ENCODE measurements at regions of chr5 and their contacts with region 1.

Region 1: DNA sequence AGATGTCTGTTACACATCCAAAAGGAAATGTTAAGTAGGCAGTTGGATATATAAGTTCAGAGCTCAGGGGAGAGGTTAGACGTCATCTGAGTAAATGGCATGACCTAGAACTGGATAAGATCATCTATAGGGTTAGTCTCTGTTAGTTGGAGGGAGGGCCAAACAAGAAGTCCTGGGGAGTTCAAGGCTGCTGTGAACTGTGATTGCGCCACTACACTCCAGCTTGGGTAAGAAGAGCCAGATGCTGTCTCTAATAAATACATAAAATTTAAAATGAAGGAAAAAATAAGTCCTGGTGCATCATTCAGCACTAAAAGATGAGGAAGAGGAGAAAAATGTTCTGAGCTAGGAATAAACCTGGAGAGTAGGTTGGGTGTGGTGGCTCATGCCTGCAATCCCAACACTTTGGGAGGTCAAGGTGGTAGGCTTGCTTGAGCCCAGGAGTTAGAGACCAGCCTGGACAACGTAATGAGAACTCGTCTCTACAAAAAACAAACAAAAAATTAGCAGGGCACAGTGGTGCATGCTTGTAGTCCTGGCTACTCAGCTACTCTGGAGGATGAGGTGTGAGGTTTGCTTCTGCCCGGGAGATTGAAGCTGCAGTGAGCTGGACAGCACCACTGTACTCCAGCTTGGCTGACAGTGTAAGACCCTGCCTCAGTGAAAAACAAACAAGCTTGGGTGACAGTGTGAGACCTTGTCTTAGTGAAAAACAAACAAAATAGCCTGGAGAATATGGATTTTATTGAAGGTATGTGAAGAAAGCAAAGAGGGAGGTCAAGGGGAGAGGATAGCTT is 123.6 kb downstream of the ACTBL2 start:
- H3K4me3 ChIP-seq: no peak overlapping the region
- H3K27ac ChIP-seq: no peak overlapping the region
- H3K4me1 ChIP-seq: no peaks in the 10 kb centered on the region
- CTCF ChIP-seq: no peak

Region 2: DNA sequence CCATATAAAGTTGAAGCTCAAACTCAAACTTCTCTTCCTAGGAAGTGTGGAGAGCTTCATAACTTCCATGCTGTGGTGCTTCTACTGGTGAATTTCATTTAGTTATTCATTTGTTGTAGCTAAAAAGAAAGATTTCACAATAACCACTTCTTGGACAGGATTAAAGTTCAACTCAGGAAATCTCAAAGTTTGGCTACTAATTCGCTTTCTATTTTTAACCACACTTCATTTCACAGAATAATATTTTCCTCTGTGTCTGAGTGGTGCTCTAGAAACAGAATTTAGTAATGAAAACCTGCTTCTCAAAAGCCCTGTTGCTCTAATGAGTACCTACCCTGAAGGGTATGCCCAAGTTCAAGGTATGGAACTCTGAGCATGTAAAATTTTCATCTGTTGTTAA is 49.7 kb after region 1 on chr5:
- CTCF ChIA-PET with region 1: no interaction called
- POLR2A ChIA-PET with region 1: interaction called, 11 read pairs
- H3K4me3 ChIP-seq: no peak overlapping the region
- H3K27ac ChIP-seq: no peak overlapping the region
- H3K4me1 ChIP-seq: no peaks in the 10 kb centered on the region; the same call in 1 of the 2 replicates
- CTCF ChIP-seq: no peak

Measured in HEK293 (cell line).